ENCODE measurements at regions of chr5 and their contacts with region 1.

Region 1: DNA sequence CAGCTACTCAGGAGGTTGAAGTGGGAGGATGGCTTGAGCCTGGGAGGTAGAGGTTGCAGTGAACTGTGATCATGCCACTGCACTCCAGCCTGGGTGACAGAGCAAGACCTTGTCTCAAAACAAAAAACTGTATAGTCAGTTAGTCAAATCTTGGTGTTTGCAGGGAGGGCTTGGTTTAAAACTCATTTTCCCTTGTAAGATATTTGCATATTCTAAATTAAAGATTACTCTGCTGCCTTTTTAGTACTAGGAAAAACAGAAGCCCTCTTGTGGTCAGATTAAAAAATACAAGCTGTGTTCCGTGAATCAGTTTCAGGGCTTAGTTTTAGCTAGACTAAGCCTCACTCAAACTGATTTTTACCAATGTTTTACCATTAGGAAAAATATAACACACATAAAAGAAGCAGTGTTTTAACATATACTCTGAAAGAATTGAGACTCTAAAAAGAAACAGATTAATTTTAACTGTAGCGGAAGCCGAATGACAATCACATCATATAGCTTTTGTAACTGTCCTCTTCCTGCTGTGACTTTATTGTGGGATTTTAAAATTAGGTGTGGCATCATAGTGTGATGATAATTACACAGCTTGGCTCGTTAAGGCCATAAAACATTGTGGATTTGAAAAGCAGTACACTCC is 84.9 kb upstream of the BASP1 start:
- DNase-seq: peak; percentile 95
- H3K4me3 ChIP-seq: no peak overlapping the region
- H3K27ac ChIP-seq: peak overlapping the region; percentile 87
- H3K4me1 ChIP-seq: peaks cover 21% of the 10 kb centered on the region
- H3K27me3 ChIP-seq: no peaks in the 10 kb centered on the region
- CTCF ChIP-seq: peak; percentile 74

Region 2: DNA sequence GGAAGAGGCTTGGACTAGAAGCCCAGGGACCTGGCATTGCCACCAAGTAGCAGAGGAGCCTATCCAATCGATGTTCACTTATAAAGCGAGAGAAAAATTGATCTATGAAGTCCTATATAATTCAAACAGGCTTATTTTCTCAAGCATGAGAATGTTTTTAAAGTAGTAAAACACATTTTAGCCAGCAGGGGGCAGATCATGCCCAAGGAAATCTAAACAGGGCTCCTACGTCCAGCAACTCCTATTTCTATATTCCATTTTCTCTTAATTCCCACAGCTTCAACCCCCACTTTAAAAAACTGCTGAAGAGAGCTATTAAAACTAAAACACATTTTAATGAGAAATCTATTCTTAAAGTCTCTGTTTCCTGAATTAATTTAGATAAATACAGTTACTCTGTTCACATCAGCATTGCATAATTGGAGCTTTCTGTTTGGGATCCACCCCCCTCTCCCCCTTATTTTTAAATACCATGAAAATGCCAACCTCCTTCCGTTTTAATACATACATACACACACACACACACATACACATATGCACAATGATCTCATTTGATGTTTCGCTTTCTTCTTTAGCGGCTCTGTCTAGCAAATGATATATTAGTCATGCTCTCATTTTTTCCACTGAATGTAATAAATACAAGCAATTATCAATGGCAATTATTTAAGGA is 341.4 kb before region 1 on chr5:
- CTCF ChIA-PET with region 1: interaction called, 15 read pairs
- POLR2A ChIA-PET with region 1: no interaction called
- intact Hi-C with region 1: loop called (anchors 1 kb)
- DNase-seq: peak; percentile 94
- H3K4me3 ChIP-seq: no peak overlapping the region
- H3K27ac ChIP-seq: peak overlapping the region; percentile 65
- H3K4me1 ChIP-seq: peaks cover 70% of the 10 kb centered on the region
- H3K27me3 ChIP-seq: no peaks in the 10 kb centered on the region
- CTCF ChIP-seq: peak; percentile 74

Region 3: GRCh38 chr5:17069995-17070511 is 62.5 kb before region 1 on chr5:
- CTCF ChIA-PET with region 1: interaction called, 11 read pairs
- POLR2A ChIA-PET with region 1: no interaction called
- intact Hi-C with region 1: no loop called
- DNase-seq: peak; percentile 57
- H3K4me3 ChIP-seq: no peak overlapping the region
- H3K27ac ChIP-seq: no peak overlapping the region
- H3K4me1 ChIP-seq: peaks cover 13% of the 10 kb centered on the region
- H3K27me3 ChIP-seq: no peaks in the 10 kb centered on the region
- CTCF ChIP-seq: no peak

Measured in A673 (cell line).